ENCODE measurements at regions of chr3 and their contacts with region 1.

Region 1: DNA sequence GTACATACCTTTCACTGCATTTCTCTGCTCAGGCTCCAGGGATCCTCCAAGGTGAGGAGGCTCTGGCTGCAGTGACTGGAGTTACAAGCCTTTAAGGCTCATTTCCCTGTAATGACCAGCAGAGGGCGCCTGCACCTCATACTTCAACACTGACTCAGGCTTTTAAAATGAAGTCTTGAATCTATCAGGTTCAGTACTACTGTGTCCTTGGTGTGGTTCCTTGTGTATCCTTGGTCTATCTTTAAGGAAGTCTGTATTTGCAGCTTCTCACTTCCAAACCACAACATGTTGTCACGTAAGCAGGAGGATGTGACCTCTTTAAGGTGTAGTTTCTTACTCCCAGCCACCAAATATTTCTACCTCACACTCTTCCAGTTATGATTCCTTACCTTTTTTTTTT is 122.5 kb upstream of the ZBED2 start:
- DNase-seq: peak; percentile 91
- H3K4me3 ChIP-seq: no peak overlapping the region
- H3K27ac ChIP-seq: peak overlapping the region; percentile 6 to 67 (median 38)
- H3K4me1 ChIP-seq: peaks cover 0 to 19% (median 9%) of the 10 kb centered on the region in 4 donors
- H3K27me3 ChIP-seq: no peaks in the 10 kb centered on the region
- CTCF ChIP-seq: peak; percentile 86 to 97 (median 94)
- EP300 ChIP-seq: no peak
- POLR2A ChIP-seq: no peak

Region 2: GRCh38 chr3:111967651-111968274 is 250.2 kb after region 1 on chr3:
- intact Hi-C with region 1: loop called (anchors 1 kb)
- DNase-seq: peak; percentile 92
- H3K4me3 ChIP-seq: no peak overlapping the region
- H3K27ac ChIP-seq: peak overlapping the region; percentile 44 to 54 (median 51)
- H3K4me1 ChIP-seq: peaks cover 0 to 32% (median 19%) of the 10 kb centered on the region in 4 donors
- H3K27me3 ChIP-seq: no peaks in the 10 kb centered on the region
- CTCF ChIP-seq: peak; percentile 86 to 88 (median 86)
- EP300 ChIP-seq: no peak
- POLR2A ChIP-seq: no peak

Region 3: GRCh38 chr3:112111785-112112402 is 394.3 kb after region 1 on chr3:
- intact Hi-C with region 1: no loop called
- DNase-seq: no peak
- H3K4me3 ChIP-seq: no peak overlapping the region
- H3K27ac ChIP-seq: no peak overlapping the region
- H3K4me1 ChIP-seq: no peaks in the 10 kb centered on the region
- H3K27me3 ChIP-seq: no peaks in the 10 kb centered on the region
- CTCF ChIP-seq: peak in 3 of 4 experiments; percentile 19 to 49 (median 40)
- EP300 ChIP-seq: no peak
- POLR2A ChIP-seq: no peak